B cell (primary cell): ENCODE measurements at regions of chr9 and their contacts with region 1.

Region 1: DNA sequence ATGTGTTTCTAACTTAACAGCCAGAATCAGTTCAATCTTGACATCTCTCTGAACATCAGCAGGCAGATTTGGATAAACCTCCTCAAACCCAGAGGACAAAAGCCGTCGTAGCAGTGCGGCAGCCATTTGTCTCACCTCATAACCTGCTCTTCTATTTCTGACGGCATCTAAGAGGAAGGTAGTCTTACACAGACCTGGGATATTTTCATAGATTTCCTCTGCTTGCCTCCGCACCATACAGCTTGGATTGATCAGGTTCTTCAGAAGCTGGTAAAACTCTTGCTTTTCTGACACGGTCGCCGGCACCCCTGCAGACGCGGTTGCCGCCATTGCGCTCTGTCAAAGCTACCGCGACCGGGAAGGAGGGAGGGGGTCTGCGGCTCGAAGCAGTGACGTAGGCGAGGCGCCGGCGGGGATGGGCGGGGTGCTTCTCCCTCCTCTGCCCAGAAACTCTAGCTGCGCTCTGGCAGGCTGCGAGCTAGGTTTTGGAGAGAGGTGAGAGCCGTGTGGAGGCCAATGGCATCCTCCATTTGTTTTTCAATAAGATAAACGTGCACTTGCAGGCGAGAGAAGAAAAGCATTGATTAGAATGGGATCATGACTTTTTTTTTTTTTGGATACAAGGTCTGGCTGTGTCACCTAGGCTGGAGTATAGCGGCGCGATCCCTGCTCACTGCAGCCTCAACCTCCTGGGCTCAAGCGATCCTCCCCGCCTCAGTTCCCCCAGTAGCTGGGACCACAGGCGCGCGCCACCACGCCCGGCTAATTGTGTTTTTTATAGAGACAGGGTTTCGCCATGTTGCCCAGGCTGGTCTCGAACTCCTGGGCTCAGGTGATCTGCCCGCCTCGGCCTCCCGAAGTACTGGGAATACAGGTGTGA is at the start of gene RANBP6:
- DNase-seq: peak; percentile 91
- ATAC-seq: peak; percentile 100
- H3K4me3 ChIP-seq: peak within 1 kb of the TSS; percentile 64 to 100 (median 73)
- H3K4me3 Mint-ChIP-seq: peak within 1 kb of the TSS; percentile 98
- H3K27ac ChIP-seq: peak within 1 kb of the TSS; percentile 65 to 83
- H3K27ac Mint-ChIP-seq: peak within 1 kb of the TSS; percentile 95
- H3K4me1 ChIP-seq: peaks cover 7 to 15% of the 10 kb centered on the region in 2 donors
- H3K4me1 Mint-ChIP-seq: peaks cover 34% of the 10 kb centered on the region
- H3K27me3 ChIP-seq: no peaks in the 10 kb centered on the region
- H3K27me3 Mint-ChIP-seq: no peaks in the 10 kb centered on the region
- CTCF ChIP-seq: no peak
- total RNA-seq, gene RANBP6: 25.0 and 25.9 TPM in 2 replicates

Region 2: DNA sequence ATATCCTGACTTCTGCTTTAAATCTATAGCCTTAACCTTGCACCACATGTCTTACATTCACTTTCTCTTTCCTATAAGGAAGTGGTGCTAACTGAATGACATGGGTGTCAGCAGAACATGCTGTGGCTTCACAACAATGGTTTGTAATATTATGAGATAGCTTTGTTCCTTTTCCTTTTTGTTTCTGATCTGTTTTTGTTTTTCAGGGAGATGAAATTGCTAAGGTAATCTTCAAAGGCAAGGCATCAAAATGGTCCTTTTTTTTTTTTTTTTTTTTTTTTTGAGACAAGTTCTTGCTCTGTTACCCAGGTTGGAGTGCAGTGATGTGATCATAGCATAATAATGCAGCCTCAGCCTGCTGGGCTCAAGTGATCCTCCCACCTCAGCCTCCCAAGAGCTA is 53.5 kb after region 1 on chr9:
- CTCF ChIA-PET with region 1: no interaction called
- POLR2A ChIA-PET with region 1: interaction called, 3 read pairs
- intact Hi-C with region 1: loop called (anchors 2 kb)
- DNase-seq: peak; percentile 73
- ATAC-seq: peak; percentile 98
- H3K4me3 ChIP-seq: peak overlapping the region in 1 of 5 experiments; percentile 20
- H3K4me3 Mint-ChIP-seq: peak overlapping the region; percentile 70
- H3K27ac ChIP-seq: peak overlapping the region; percentile 8 to 37
- H3K27ac Mint-ChIP-seq: peak overlapping the region; percentile 82
- H3K4me1 ChIP-seq: peaks cover 15 to 19% of the 10 kb centered on the region in 2 donors
- H3K4me1 Mint-ChIP-seq: peaks cover 17% of the 10 kb centered on the region
- H3K27me3 ChIP-seq: peaks cover 0 to 9% (median 0%) of the 10 kb centered on the region in 4 experiments
- H3K27me3 Mint-ChIP-seq: peaks cover 11% of the 10 kb centered on the region
- CTCF ChIP-seq: no peak